Stomach (tissue), 19 donors: ENCODE measurements at regions of chr2 and their contacts with region 1.

Region 1: DNA sequence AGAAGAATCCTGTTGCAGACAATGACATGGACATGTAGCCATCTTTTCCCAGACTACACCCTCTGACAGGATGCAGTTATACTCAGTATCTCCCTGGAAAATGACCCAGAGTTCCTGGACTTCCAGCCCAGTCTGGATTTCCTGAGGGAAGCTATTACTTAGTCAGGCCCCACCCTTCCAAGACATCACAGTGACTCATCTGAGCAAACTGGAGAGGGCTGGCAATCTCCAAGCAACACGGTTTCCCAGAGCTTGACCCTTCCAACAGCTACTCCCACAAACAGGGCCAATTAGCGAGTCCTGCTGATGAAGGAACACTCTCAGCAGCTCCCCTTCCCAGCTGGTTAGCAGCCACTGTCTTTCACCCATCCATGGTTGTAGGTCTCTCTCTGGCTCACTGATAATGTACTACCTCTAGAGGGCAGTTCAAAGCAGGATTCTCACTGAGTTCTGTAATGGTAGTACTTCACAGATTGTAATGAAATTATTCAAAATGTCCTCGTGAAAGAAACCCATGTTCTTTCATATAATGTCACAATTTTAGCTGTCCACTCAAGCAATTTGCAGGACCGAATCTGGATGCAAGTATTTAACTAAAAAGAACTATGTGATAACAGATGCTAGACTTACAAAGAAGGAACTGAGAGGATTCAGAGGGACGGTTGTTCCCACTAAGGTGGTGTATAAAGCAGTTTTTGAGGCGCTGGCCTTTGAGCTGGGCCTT is 110.2 kb downstream of the MDH1 start:
- DNase-seq: peak in 1 of 2 donors; percentile 60
- H3K4me3 ChIP-seq: no peak overlapping the region
- H3K27ac ChIP-seq: peak overlapping the region in 3 of 5 donors; percentile 9 to 46 (median 41)
- H3K4me1 ChIP-seq: peaks cover 0 to 12% (median 0%) of the 10 kb centered on the region in 4 donors
- H3K27me3 ChIP-seq: no peaks in the 10 kb centered on the region
- CTCF ChIP-seq: peak in 4 of 7 experiments; percentile 27 to 52 (median 34)
- EP300 ChIP-seq: no peak
- POLR2A ChIP-seq: no peak

Region 2: DNA sequence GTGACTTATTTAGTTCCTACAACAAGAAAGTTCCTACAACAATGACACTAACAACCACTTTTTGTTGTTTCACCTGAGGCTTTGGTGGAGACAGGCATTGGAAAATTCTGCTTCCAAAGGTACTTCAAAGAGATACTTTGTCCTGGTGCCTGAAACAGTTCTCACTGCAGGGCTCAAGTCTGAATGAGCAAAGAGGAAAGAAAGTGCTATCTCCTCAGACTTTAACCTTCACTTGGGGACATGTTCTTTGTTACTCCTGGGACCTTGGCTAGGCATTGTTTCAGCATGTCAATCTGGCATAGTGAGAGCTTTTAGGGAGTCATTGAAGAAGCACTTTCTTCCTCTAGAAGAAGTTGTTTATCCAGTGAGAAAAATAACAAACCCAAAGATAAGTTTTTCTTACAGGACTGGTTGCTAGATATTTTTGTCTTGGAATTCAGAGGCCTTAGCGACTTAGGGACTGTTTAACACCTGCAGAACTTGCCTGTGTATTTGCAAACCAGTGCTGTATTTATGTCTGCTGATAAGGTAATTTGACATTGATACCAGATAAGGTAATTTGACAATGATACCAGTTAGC is 98.0 kb before region 1 on chr2:
- intact Hi-C with region 1: no loop called
- DNase-seq: no peak
- H3K4me3 ChIP-seq: no peak overlapping the region
- H3K27ac ChIP-seq: peak overlapping the region in 1 of 5 donors; percentile 17
- H3K4me1 ChIP-seq: peaks cover 0 to 30% (median 14%) of the 10 kb centered on the region in 4 donors
- H3K27me3 ChIP-seq: no peaks in the 10 kb centered on the region
- CTCF ChIP-seq: no peak
- EP300 ChIP-seq: no peak
- POLR2A ChIP-seq: no peak

Region 3: DNA sequence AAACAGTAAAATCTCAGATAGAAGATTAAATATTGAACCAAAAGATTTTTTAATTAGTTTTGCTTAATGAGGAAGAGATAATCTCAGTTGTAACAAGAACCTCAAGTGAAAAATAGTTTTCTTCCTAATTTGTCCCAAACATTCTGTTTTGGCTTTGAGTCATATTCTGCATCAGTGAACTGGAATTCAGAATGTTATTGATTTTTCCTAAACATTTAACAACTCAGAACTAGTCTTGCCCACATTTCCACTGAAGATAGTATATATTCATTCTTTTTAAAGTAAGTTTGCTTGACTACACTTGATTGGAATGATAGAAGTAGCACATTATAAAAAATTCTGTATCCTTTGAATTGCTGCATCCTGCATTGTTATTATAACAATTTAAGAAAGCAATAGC is 57.0 kb after region 1 on chr2:
- intact Hi-C with region 1: no loop called
- DNase-seq: no peak
- H3K4me3 ChIP-seq: no peak overlapping the region
- H3K27ac ChIP-seq: no peak overlapping the region
- H3K4me1 ChIP-seq: no peaks in the 10 kb centered on the region
- H3K27me3 ChIP-seq: no peaks in the 10 kb centered on the region
- CTCF ChIP-seq: no peak
- EP300 ChIP-seq: no peak
- POLR2A ChIP-seq: no peak

Region 4: DNA sequence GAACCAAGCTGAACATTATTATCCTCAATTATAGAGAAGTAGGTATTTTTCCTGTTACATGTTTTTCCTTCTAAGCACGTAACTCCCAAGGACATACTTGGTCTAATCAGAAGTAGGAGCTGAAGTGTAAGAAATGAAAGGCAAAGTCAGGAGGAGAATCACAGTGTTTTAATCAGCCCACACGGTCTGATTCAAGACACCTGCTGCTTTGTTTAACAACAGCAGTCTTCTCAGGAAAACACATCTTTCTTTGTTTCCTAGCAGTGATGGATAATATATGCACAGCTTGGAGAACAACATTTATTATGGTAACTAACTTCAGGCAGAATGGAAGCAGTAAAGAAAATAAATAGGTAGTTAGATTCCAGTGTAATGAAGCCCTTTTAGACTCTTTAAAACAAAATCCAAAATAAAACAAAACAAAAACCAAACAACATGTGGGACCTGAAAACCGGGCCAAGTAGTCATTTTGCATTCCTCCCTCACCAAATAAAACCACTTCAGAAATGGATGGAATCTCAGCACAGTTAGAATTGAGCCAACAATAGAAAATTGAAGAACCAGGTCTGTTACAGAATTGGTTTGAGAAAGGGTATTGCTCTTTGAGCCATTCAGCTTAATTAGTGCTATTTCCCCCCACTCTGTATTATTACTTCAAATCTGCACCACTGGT is 81.6 kb after region 1 on chr2:
- intact Hi-C with region 1: no loop called
- DNase-seq: no peak
- H3K4me3 ChIP-seq: no peak overlapping the region
- H3K27ac ChIP-seq: no peak overlapping the region
- H3K4me1 ChIP-seq: no peaks in the 10 kb centered on the region
- H3K27me3 ChIP-seq: no peaks in the 10 kb centered on the region
- CTCF ChIP-seq: no peak
- EP300 ChIP-seq: no peak
- POLR2A ChIP-seq: no peak

Region 5: GRCh38 chr2:63875131-63875527 is 176.1 kb after region 1 on chr2:
- intact Hi-C with region 1: loop called (anchors 5 kb)
- DNase-seq: no peak
- H3K4me3 ChIP-seq: no peak overlapping the region
- H3K27ac ChIP-seq: peak overlapping the region in 1 of 5 donors; percentile 43
- H3K4me1 ChIP-seq: peaks cover 4 to 46% (median 18%) of the 10 kb centered on the region in 4 donors
- H3K27me3 ChIP-seq: no peaks in the 10 kb centered on the region
- CTCF ChIP-seq: no peak
- EP300 ChIP-seq: no peak
- POLR2A ChIP-seq: no peak